ENCODE measurements at regions of chr1 and their contacts with region 1.

Region 1: GRCh38 chr1:1858382-1859086 is 32.4 kb downstream of the GNB1 start:
- DNase-seq: no peak
- ATAC-seq: no peak
- H3K4me3 Mint-ChIP-seq: peak overlapping the region; percentile 48
- H3K27ac Mint-ChIP-seq: peak overlapping the region; percentile 66
- H3K4me1 Mint-ChIP-seq: peaks cover 86% of the 10 kb centered on the region
- H3K27me3 Mint-ChIP-seq: no peaks in the 10 kb centered on the region
- CTCF ChIP-seq: no peak

Region 2: DNA sequence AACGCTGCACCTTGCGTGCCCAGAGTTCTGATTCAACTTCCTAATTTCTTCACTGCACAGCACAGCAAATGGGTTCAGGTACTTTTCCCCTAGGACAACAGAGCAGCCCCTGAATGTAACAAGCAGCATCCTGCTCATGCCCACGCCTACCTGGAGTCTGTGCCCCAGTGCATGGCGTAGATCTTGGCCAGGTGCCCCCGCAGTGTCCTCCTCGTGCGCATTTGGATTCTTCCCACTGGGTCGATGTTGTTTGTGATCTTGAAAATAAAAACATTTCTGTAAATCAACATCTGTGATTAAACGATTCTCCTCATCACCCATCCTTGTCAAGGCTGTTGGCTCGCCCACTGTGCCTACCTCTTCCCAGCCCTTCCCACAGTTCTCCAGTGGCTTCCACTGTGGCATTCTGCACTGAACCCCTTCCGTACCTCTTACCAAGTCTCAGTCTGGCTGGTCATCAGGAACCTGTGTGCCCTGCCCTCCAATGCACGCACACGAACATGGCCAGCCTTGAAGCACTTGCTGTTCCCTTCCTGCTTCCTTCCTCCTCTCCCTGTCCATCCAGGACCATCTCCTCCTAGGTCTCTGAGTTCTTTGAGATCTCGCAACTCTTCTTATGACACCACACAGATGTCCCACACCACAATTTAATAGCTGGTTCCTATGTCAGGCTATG is 42.8 kb before region 1 on chr1:
- CTCF ChIA-PET with region 1: no interaction called
- POLR2A ChIA-PET with region 1: no interaction called
- intact Hi-C with region 1: no loop called
- DNase-seq: no peak
- ATAC-seq: no peak
- H3K4me3 Mint-ChIP-seq: no peak overlapping the region
- H3K27ac Mint-ChIP-seq: no peak overlapping the region
- H3K4me1 Mint-ChIP-seq: peaks cover 8% of the 10 kb centered on the region
- H3K27me3 Mint-ChIP-seq: no peaks in the 10 kb centered on the region
- CTCF ChIP-seq: no peak

Region 3: GRCh38 chr1:1847061-1847850 is 11.3 kb before region 1 on chr1:
- CTCF ChIA-PET with region 1: interaction called, 4 read pairs
- POLR2A ChIA-PET with region 1: interaction called, 5 read pairs
- intact Hi-C with region 1: loop called (anchors 1 kb)
- DNase-seq: no peak
- ATAC-seq: no peak
- H3K4me3 Mint-ChIP-seq: peak overlapping the region; percentile 38
- H3K27ac Mint-ChIP-seq: peak overlapping the region; percentile 79
- H3K4me1 Mint-ChIP-seq: peaks cover 74% of the 10 kb centered on the region
- H3K27me3 Mint-ChIP-seq: no peaks in the 10 kb centered on the region
- CTCF ChIP-seq: no peak

Measured in activated B cell treated with CpG ODN at 0.5 μM for 24 hours (primary cell).